T-cell (primary cell): ENCODE measurements at regions of chr12 and their contacts with region 1.

Region 1: DNA sequence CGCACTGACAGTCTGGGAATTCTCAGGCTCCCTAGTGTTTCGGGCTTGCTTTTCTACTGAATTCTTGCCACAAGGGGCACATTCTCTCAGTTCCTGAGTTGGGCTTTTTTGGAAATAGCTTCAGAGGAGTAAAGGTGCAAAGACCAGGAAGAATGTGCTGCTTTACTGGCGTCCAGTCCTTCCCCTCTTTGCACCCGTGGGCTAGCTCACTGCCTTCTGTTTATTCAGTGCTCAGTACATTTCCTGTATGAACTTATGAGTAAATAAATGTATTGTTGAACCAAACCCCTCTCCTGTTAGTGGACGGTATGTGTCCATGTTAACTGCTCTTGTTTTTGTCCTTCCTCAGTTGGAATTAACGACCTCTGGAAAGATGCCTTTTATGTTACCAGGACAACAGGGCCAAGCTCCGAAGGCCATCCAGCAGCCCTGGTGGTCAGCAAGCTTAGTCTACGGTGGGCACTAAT is 24.0 kb downstream of the GSG1 start:
- DNase-seq: no peak
- ATAC-seq: no peak
- H3K4me3 ChIP-seq: no peak overlapping the region
- H3K4me3 Mint-ChIP-seq: no peak overlapping the region
- H3K27ac ChIP-seq: no peak overlapping the region
- H3K27ac Mint-ChIP-seq: no peak overlapping the region
- H3K4me1 ChIP-seq: no peaks in the 10 kb centered on the region
- H3K4me1 Mint-ChIP-seq: no peaks in the 10 kb centered on the region
- H3K27me3 ChIP-seq: no peaks in the 10 kb centered on the region
- H3K27me3 Mint-ChIP-seq: no peaks in the 10 kb centered on the region

Region 2: GRCh38 chr12:12533238-12533829 is 546.1 kb before region 1 on chr12:
- CTCF ChIA-PET with region 1: no interaction called
- POLR2A ChIA-PET with region 1: no interaction called
- DNase-seq: no peak
- ATAC-seq: no peak
- H3K4me3 ChIP-seq: no peak overlapping the region
- H3K4me3 Mint-ChIP-seq: no peak overlapping the region
- H3K27ac ChIP-seq: no peak overlapping the region
- H3K27ac Mint-ChIP-seq: peak overlapping the region; percentile 83 to 84
- H3K4me1 ChIP-seq: peaks cover 3 to 5% of the 10 kb centered on the region in 2 experiments
- H3K4me1 Mint-ChIP-seq: peaks cover 34 to 55% (median 53%) of the 10 kb centered on the region in 3 donors
- H3K27me3 ChIP-seq: no peaks in the 10 kb centered on the region
- H3K27me3 Mint-ChIP-seq: no peaks in the 10 kb centered on the region

Region 3: DNA sequence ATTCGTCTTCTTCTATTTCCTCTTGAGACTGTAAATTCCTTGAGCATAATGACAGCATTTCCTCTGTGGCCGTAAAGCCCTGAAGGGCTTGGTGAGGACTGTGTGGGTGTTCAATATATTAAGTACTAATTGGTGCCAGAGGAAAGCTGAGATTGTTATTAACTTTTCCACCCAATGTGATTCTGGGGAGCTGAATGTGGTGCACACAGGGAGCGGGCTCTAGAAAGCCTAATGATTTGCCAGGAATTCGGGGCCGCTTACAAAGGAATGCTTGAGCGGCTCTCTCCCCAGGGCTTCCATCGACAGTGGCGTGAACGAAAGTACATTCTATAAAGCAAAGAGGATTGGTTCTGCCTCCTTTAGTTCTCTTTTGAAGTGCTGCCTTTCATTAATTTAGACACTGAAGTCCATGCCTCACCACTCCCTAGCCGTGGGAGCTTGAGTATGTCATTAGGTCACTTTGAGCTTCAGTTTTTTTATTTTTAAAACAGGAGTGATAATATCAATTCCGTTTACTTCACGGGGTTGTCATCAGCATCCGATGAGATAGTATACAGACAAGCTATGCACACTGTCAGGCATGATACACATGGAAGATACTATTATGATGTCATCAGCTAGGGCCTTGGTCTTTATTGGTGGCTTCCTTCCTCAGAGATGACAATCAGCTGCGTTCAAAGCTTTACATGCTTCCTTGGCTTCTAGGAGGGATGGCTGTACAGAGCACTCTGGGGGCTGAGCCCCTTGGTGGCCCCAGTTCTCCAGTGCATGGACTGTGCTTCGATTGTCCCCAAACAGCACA is 35.0 kb after region 1 on chr12:
- CTCF ChIA-PET with region 1: interaction called in 1 of 2 experiments, 12 read pairs
- POLR2A ChIA-PET with region 1: no interaction called
- DNase-seq: no peak
- ATAC-seq: no peak
- H3K4me3 ChIP-seq: no peak overlapping the region
- H3K4me3 Mint-ChIP-seq: no peak overlapping the region
- H3K27ac ChIP-seq: no peak overlapping the region
- H3K27ac Mint-ChIP-seq: no peak overlapping the region
- H3K4me1 ChIP-seq: no peaks in the 10 kb centered on the region
- H3K4me1 Mint-ChIP-seq: no peaks in the 10 kb centered on the region
- H3K27me3 ChIP-seq: peaks cover 0 to 6% of the 10 kb centered on the region in 2 experiments
- H3K27me3 Mint-ChIP-seq: peaks cover 11 to 13% of the 10 kb centered on the region in 2 donors